Activated CD8-positive, alpha-beta T cell treated with anti-CD3 and anti-CD28 coated beads, Interleukin-2, amount 10 ng/mL, durations not matched to agents 7 days and 5 days (primary cell): ENCODE measurements at regions of chr2 and their contacts with region 1.

Region 1: GRCh38 chr2:10434886-10435819 is 13.0 kb downstream of the ODC1 start:
- DNase-seq: peak; percentile 83
- ATAC-seq: peak; percentile 66
- H3K4me3 Mint-ChIP-seq: no peak overlapping the region
- H3K27ac Mint-ChIP-seq: peak overlapping the region; percentile 8
- H3K4me1 Mint-ChIP-seq: peaks cover 11% of the 10 kb centered on the region
- H3K27me3 Mint-ChIP-seq: peaks cover 15% of the 10 kb centered on the region

Region 2: DNA sequence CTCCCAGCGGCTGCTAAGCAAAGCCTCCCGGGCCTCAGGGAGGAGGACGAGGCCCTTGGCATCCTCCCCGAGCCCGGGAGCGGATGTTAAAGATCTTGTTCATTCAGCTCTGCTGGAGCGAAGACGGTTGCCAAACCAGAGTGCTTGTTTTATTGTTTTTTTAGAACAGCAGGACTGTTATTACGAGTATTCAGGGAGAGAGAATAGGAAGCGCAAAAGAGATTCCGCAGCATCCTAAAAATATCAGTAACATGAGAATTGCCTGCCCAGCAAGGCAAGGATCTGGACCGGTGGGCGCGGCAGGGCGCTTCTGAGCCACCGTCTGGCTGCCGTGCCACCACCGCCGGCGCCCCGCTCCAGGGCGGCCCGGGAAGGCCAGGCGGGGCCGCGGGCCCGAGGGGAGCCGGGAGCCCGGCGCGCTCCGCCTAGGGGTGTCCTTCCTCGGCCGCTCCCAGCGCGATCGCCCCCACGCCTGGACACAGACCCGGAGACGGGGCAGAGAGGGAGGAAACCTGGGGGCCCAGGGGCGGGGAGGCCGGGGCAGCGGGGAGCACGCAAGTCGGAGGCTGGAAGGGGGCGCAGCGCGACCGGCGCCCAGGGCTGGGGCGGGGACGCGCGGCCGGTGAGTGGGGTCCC is 355.8 kb before region 1 on chr2:
- CTCF ChIA-PET with region 1: interaction called, 19 read pairs
- POLR2A ChIA-PET with region 1: no interaction called
- DNase-seq: peak; percentile 37
- ATAC-seq: peak; percentile 56
- H3K4me3 Mint-ChIP-seq: peak overlapping the region; percentile 73
- H3K27ac Mint-ChIP-seq: no peak overlapping the region
- H3K4me1 Mint-ChIP-seq: peaks cover 27% of the 10 kb centered on the region
- H3K27me3 Mint-ChIP-seq: peaks cover 63% of the 10 kb centered on the region

Region 3: DNA sequence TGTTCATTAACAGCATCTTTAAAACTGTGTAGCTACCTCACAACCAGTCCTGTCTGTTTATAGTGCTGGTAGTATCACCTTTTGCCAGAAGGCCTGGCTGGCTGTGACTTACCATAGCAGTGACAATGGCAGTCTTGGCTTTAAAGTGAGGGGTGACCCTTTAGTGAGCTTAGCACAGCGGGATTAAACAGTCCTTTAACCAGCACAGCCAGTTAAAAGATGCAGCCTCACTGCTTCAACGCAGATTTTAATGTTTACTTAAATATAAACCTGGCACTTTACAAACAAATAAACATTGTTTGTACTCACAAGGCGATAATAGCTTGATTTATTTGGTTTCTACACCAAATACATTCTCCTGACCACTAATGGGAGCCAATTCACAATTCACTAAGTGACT is 305.7 kb before region 1 on chr2:
- CTCF ChIA-PET with region 1: interaction called, 74 read pairs
- POLR2A ChIA-PET with region 1: interaction called, 4 read pairs
- DNase-seq: no peak
- ATAC-seq: no peak
- H3K4me3 Mint-ChIP-seq: peak overlapping the region; percentile 66
- H3K27ac Mint-ChIP-seq: no peak overlapping the region
- H3K4me1 Mint-ChIP-seq: peaks cover 73% of the 10 kb centered on the region
- H3K27me3 Mint-ChIP-seq: no peaks in the 10 kb centered on the region

Region 4: DNA sequence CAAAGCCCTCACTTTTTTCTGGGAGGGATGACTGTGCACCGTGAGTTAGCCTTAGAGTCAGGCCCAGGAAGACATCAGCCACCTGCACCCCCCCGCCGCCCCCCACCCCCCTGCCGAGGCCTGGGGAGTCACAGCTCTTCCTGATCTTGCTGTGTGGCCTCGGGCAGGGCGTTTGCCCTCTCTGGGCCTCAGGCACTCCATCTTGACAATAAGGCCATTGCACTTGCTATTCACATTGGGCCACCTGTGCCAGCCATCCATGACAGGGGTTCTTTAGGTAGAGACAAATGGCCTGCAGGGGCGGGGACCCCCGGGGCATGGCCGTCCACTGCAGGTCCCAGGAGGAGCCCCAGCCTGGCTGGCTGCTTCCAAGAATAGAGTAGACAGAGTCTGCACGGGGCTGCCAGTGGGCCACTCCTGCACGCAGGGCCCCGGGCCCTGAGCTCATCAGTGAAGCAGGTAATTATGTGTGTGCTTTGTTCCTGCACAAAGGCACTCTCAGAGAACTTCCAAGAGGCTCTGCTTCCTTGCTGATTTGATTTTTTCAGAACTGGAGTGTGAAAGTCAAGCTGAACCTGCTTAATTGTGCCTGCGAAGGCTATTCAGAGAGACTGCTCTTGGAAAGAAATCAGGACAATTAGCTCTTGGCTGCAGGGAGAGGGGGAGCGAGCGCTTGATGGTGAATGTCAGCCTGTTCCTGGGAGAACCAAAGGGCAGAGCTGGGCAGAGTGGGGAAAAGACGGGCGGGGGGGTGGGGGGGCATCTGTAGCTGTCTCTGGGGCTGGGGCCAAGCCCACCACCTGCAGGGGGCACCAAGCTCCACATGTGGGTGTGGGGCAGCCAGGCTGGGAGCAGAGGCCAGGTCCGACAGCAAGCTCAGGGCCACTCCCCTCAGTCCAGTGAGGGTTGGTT is 272.3 kb before region 1 on chr2:
- CTCF ChIA-PET with region 1: interaction called, 18 read pairs
- POLR2A ChIA-PET with region 1: no interaction called
- DNase-seq: no peak
- ATAC-seq: no peak
- H3K4me3 Mint-ChIP-seq: no peak overlapping the region
- H3K27ac Mint-ChIP-seq: no peak overlapping the region
- H3K4me1 Mint-ChIP-seq: peaks cover 29% of the 10 kb centered on the region
- H3K27me3 Mint-ChIP-seq: no peaks in the 10 kb centered on the region

Region 5: GRCh38 chr2:10302479-10303180 is 132.5 kb before region 1 on chr2 and contains the start of gene HPCAL1:
- CTCF ChIA-PET with region 1: interaction called, 14 read pairs
- POLR2A ChIA-PET with region 1: no interaction called
- DNase-seq: peak; percentile 87
- ATAC-seq: peak; percentile 72
- H3K4me3 Mint-ChIP-seq: peak within 1 kb of the TSS; percentile 99
- H3K27ac Mint-ChIP-seq: peak within 1 kb of the TSS; percentile 77
- H3K4me1 Mint-ChIP-seq: peaks cover 75% of the 10 kb centered on the region
- H3K27me3 Mint-ChIP-seq: no peaks in the 10 kb centered on the region
- total RNA-seq, gene HPCAL1: 55.8 to 56.6 TPM

Region 6: GRCh38 chr2:10344105-10345066 is 90.8 kb before region 1 on chr2:
- CTCF ChIA-PET with region 1: no interaction called
- POLR2A ChIA-PET with region 1: no interaction called
- DNase-seq: no peak
- ATAC-seq: no peak
- H3K4me3 Mint-ChIP-seq: no peak overlapping the region
- H3K27ac Mint-ChIP-seq: peak overlapping the region; percentile 40
- H3K4me1 Mint-ChIP-seq: peaks cover 41% of the 10 kb centered on the region
- H3K27me3 Mint-ChIP-seq: no peaks in the 10 kb centered on the region

Region 7: DNA sequence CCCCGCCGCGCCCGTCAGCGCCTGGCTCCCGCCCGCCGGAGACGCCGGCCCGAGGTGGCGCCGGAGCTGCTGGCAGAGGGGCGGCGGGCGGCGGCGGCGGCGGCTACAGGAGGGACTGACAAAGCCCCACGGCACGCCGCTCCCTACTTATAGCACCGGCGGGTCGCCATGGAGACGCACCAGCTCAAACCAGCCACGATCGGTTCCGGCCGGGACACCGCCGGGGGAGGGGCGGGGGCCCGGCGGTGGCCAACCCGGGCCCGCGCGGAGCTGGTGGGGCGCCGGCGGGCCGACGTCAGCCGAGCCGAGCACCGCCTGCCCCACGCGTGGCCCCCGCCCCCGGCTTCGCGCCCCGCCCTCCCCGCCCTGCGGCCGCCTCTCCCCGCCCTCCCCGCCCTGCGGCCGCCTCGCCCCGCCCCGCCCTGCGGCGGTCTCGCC is 13.1 kb after region 1 on chr2 and contains the start of gene ODC1:
- CTCF ChIA-PET with region 1: interaction called, 47 read pairs
- POLR2A ChIA-PET with region 1: interaction called, 3 read pairs
- DNase-seq: peak; percentile 96
- ATAC-seq: peak; percentile 87
- H3K4me3 Mint-ChIP-seq: peak within 1 kb of the TSS; percentile 87
- H3K27ac Mint-ChIP-seq: peak within 1 kb of the TSS; percentile 91
- H3K4me1 Mint-ChIP-seq: peaks cover 44% of the 10 kb centered on the region
- H3K27me3 Mint-ChIP-seq: no peaks in the 10 kb centered on the region
- total RNA-seq, gene ODC1: 54.4 to 54.6 TPM

Region 8: GRCh38 chr2:10504994-10505820 is 70.1 kb after region 1 on chr2:
- CTCF ChIA-PET with region 1: no interaction called
- POLR2A ChIA-PET with region 1: no interaction called
- DNase-seq: no peak
- ATAC-seq: no peak
- H3K4me3 Mint-ChIP-seq: no peak overlapping the region
- H3K27ac Mint-ChIP-seq: no peak overlapping the region
- H3K4me1 Mint-ChIP-seq: no peaks in the 10 kb centered on the region
- H3K27me3 Mint-ChIP-seq: peaks cover 22% of the 10 kb centered on the region

Region 9: DNA sequence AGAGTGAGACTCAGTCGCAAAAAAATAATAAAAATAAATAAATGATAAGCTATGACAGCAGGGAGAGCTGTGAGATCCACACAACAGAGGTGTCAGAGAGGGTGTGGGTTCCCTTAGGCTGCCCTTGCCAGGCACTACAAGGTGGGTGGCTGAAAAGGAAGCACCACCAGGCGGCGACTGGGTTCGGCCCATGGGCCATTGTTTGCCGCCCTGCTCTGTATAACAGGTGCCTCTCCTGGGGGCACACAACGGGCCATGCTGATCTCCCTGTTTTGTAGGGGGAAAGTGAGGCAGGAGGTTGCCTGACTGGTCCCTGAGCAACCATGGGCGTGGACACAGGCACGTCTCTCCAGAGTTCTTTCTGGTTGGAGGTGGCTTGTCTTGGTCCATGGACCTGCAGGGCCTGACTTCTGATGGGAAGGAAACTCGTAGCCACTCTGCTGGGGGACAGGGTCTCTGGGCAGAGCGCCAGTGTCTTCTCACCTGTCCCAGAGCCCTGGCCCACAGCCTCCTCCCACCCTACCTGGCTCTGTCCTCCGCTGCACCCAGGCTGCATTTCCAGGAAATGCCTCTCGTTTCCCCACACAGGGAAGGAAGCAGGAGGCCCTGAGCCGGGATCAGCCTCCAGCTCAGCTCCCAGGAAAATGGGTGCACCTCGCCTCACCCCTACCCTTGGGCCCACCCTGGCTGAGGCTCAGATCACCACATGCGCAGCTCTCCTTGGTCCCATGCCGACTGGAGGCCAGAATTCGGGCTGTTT is 122.5 kb after region 1 on chr2:
- CTCF ChIA-PET with region 1: no interaction called
- POLR2A ChIA-PET with region 1: no interaction called
- DNase-seq: no peak
- ATAC-seq: no peak
- H3K4me3 Mint-ChIP-seq: no peak overlapping the region
- H3K27ac Mint-ChIP-seq: no peak overlapping the region
- H3K4me1 Mint-ChIP-seq: peaks cover 9% of the 10 kb centered on the region
- H3K27me3 Mint-ChIP-seq: no peaks in the 10 kb centered on the region